ENCODE measurements at regions of chr2 and their contacts with region 1.

Region 1: GRCh38 chr2:85826990-85827878 is 61.6 kb downstream of the ST3GAL5 start:
- DNase-seq: peak; percentile 34
- H3K4me3 ChIP-seq: peak overlapping the region in 1 of 3 experiments; percentile 9
- H3K27ac ChIP-seq: no peak overlapping the region
- H3K4me1 ChIP-seq: no peaks in the 10 kb centered on the region
- H3K27me3 ChIP-seq: peaks cover 3% of the 10 kb centered on the region
- CTCF ChIP-seq: peak; percentile 72 to 82

Region 2: GRCh38 chr2:85806358-85807118 is 20.7 kb before region 1 on chr2:
- CTCF ChIA-PET with region 1: no interaction called
- dilution Hi-C with region 1: no loop called
- in situ Hi-C with region 1: no loop called
- intact Hi-C with region 1: no loop called
- DNase-seq: no peak
- H3K4me3 ChIP-seq: no peak overlapping the region
- H3K27ac ChIP-seq: no peak overlapping the region
- H3K4me1 ChIP-seq: no peaks in the 10 kb centered on the region
- H3K27me3 ChIP-seq: no peaks in the 10 kb centered on the region
- CTCF ChIP-seq: no peak

Region 3: GRCh38 chr2:85865539-85866164 is 38.4 kb after region 1 on chr2:
- CTCF ChIA-PET with region 1: no interaction called
- dilution Hi-C with region 1: no loop called
- in situ Hi-C with region 1: no loop called
- intact Hi-C with region 1: no loop called
- DNase-seq: peak; percentile 73
- H3K4me3 ChIP-seq: no peak overlapping the region
- H3K27ac ChIP-seq: no peak overlapping the region
- H3K4me1 ChIP-seq: peaks cover 12% of the 10 kb centered on the region
- H3K27me3 ChIP-seq: no peaks in the 10 kb centered on the region
- CTCF ChIP-seq: no peak

Region 4: GRCh38 chr2:86035883-86036668 is 208.8 kb after region 1 on chr2:
- CTCF ChIA-PET with region 1: interaction called, 6 read pairs
- dilution Hi-C with region 1: no loop called
- in situ Hi-C with region 1: no loop called
- intact Hi-C with region 1: loop called (anchors 1 kb)
- DNase-seq: peak; percentile 20
- H3K4me3 ChIP-seq: no peak overlapping the region
- H3K27ac ChIP-seq: no peak overlapping the region
- H3K4me1 ChIP-seq: peaks cover 27% of the 10 kb centered on the region
- H3K27me3 ChIP-seq: no peaks in the 10 kb centered on the region
- CTCF ChIP-seq: peak; percentile 9 to 21

Region 5: DNA sequence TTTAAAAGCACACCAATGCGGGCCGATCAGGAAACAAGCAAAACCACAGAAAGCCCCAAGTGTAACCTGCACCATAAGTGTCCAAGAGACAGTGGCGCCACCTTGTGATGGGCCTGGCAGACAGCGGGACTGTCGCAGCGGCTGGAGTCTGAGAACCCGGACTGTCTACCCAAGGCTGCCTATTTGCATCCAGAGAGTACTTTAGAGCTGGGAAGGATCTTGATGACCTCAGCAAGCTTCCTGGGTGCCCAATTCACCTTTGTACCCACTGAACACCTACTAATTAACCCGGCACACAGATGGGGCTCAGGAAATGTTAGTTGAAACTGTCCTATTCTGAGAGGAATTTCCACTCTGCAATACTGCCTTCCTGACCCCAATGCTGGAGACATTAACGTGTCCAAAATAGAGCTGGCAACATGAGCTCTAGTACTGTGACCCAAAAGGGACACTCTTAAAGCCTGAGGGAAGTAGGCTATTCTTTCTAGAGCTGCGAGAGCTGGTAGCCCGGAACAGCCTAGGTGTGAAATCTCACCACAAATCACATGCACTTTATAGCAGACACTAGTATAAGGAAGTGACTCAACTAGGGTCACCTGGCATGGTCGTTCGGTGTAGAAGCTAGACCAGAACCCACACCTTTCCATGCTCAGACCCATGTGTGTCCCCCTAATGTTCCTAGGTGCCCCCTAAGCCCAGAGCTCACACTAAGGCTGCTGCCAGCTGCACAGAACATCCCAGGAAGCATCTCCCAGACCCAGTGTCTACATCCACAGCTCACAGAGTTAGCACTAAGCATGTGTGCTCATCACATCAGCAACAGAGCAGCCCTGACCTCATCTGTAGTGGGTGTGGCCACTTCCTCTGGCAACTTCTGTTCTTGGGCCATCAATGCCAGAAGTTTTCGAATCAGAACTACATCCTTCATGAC is 253.0 kb after region 1 on chr2:
- CTCF ChIA-PET with region 1: interaction called, 8 read pairs
- dilution Hi-C with region 1: no loop called
- in situ Hi-C with region 1: loop called (anchors 5 kb)
- intact Hi-C with region 1: loop called (anchors 1 kb)
- DNase-seq: peak; percentile 30
- H3K4me3 ChIP-seq: no peak overlapping the region
- H3K27ac ChIP-seq: no peak overlapping the region
- H3K4me1 ChIP-seq: no peaks in the 10 kb centered on the region
- H3K27me3 ChIP-seq: no peaks in the 10 kb centered on the region
- CTCF ChIP-seq: peak; percentile 70 to 89

Region 6: DNA sequence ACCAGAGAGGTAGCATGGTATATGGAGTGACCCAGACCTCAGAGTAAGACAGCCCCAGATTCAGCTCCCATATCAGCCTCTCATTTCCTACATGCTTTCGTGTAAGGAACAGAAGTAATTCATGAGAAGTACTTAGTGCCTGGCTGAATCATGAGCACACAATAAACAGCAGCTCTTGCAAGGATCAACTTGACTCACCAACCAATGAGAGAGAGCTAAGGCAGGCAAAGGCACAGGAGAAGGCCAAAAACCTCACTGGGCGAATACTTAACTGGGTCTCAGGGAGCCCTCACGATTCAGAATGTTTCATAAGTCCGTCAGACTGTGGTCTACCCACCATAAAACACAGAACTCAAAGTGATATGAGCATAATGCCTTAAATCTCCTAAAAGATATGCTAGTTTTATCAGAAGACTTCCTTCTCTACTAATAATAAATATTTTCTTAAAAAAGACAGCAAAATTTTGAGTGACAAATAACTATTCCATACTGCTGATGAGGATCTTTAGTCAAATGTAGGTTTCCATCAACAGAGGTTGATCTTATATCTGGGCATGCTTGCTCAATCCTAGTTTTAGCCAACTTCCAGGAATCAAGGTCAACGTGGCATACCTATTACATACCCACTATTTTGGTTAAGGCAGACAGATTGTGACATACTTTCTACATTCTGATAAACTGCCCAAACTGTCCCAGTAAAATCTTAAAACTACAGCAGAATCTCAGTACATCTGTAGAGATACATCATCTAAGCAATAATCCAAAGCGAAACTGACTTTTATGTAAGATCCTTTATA is 333.1 kb after region 1 on chr2:
- CTCF ChIA-PET with region 1: no interaction called
- dilution Hi-C with region 1: no loop called
- in situ Hi-C with region 1: no loop called
- intact Hi-C with region 1: no loop called
- DNase-seq: no peak
- H3K4me3 ChIP-seq: no peak overlapping the region
- H3K27ac ChIP-seq: no peak overlapping the region
- H3K4me1 ChIP-seq: no peaks in the 10 kb centered on the region
- H3K27me3 ChIP-seq: no peaks in the 10 kb centered on the region
- CTCF ChIP-seq: no peak

Region 7: GRCh38 chr2:86368161-86368824 is 541.1 kb after region 1 on chr2:
- CTCF ChIA-PET with region 1: no interaction called
- dilution Hi-C with region 1: no loop called
- in situ Hi-C with region 1: no loop called
- intact Hi-C with region 1: loop called (anchors 5 kb)
- DNase-seq: peak; percentile 20
- H3K4me3 ChIP-seq: no peak overlapping the region
- H3K27ac ChIP-seq: no peak overlapping the region
- H3K4me1 ChIP-seq: peaks cover 4% of the 10 kb centered on the region
- H3K27me3 ChIP-seq: no peaks in the 10 kb centered on the region
- CTCF ChIP-seq: peak; percentile 29 to 53

Measured in mammary epithelial cell (primary cell).